ENCODE measurements at regions of chr18 and their contacts with region 1.

Region 1: GRCh38 chr18:2212806-2213205 is 358.5 kb downstream of the METTL4 start:
- DNase-seq: no peak
- H3K4me3 ChIP-seq: no peak overlapping the region
- H3K27ac ChIP-seq: no peak overlapping the region
- H3K4me1 ChIP-seq: no peaks in the 10 kb centered on the region
- H3K27me3 ChIP-seq: no peaks in the 10 kb centered on the region
- CTCF ChIP-seq: no peak

Region 2: DNA sequence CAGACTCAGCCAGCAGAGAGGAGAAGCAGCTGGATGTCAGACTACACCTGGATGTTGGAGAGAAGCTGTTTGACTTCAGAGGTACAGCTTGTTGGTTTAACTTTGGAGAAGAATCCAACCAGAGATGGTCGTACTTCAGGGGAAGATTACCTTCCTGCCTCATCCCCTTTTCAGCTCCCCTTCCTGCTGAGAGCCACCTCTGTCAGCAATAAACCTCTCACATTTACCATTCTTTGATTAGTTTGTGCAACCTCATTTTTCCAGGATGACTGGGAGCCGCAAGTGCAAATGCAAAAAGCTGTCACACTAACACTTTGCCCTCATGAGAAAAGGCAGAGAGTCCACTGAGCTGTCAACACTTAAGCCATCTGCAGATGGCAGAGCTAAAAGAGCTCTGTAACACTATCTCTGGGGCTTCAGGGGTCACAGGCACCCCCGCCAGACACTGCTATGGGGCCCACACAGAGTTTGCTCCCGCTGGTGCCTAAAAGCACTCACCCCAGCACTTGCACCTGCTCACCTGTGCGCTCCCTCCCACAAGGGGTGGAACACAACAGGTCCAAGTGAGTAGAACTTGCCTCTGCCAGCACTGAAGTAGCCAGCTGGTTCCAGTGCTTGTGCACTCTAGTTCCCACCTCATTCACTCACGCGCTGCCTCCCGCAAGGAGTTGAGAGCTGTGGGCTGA is 33.2 kb before region 1 on chr18:
- intact Hi-C with region 1: loop called (anchors 5 kb)
- DNase-seq: no peak
- H3K4me3 ChIP-seq: no peak overlapping the region
- H3K27ac ChIP-seq: no peak overlapping the region
- H3K4me1 ChIP-seq: no peaks in the 10 kb centered on the region
- H3K27me3 ChIP-seq: no peaks in the 10 kb centered on the region
- CTCF ChIP-seq: no peak